Cardiac septum (tissue), 1 donor: ENCODE measurements at regions of chr3 and their contacts with region 1.

Region 1: GRCh38 chr3:16600780-16601539 is 4.3 kb downstream of the DAZL start:
- DNase-seq: peak; percentile 85

Region 2: GRCh38 chr3:16723978-16724377 is 123.0 kb after region 1 on chr3:
- intact Hi-C with region 1: no loop called
- DNase-seq: no peak

Region 3: GRCh38 chr3:16801698-16802097 is 200.7 kb after region 1 on chr3:
- intact Hi-C with region 1: loop called (anchors 10 kb)
- DNase-seq: no peak

Region 4: GRCh38 chr3:17039580-17039979 is 438.6 kb after region 1 on chr3:
- intact Hi-C with region 1: loop called (anchors 5 kb)
- DNase-seq: no peak

Region 5: DNA sequence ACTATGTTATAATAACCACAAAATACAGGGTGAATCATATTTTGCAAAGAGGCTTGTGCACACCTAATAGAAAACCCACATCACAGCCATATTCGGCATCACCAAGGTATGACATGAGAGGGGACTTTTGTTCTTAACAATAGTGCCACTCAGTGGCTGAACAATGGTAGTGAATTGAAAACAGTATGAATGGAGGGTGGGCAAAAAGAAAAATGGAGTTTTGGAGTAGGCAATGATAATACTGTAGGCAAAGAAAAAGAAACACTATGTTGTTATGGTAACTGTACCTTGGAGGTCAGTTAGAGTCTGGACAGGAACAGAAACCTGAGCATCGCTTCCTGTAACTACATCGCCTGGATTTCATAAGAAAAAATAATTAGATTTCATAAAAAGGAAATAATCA is 632.4 kb after region 1 on chr3:
- intact Hi-C with region 1: loop called (anchors 1 kb)
- DNase-seq: no peak

Region 6: DNA sequence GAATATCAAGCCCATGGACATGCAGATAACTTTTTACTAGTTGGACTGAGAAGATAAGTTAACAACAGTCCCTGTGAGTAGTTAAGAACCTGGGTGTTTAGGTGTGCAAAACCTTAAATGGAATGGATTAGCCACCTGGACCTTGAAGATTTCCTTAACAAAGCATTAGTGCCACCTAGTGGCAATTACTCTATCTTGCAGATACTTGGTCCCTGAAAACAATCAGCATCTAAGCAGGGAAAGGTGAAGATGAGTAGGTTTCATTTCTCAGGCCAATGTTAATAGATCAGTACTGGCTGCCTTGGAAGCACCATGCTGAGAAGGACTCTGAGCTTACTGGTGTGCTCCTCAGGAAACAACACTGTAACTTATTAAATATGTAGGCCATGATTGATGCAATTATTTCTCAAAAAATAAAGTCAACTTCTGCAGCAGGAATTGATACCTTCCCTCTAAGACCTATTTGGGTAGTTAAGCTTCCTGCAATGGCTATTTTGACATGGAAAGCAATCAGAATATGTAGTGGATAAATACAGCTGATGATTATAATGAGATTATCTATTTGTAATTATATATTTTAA is 812.1 kb after region 1 on chr3:
- intact Hi-C with region 1: loop called (anchors 5 kb)
- DNase-seq: no peak